ENCODE measurements at regions of chr9 and their contacts with region 1.

Region 1: DNA sequence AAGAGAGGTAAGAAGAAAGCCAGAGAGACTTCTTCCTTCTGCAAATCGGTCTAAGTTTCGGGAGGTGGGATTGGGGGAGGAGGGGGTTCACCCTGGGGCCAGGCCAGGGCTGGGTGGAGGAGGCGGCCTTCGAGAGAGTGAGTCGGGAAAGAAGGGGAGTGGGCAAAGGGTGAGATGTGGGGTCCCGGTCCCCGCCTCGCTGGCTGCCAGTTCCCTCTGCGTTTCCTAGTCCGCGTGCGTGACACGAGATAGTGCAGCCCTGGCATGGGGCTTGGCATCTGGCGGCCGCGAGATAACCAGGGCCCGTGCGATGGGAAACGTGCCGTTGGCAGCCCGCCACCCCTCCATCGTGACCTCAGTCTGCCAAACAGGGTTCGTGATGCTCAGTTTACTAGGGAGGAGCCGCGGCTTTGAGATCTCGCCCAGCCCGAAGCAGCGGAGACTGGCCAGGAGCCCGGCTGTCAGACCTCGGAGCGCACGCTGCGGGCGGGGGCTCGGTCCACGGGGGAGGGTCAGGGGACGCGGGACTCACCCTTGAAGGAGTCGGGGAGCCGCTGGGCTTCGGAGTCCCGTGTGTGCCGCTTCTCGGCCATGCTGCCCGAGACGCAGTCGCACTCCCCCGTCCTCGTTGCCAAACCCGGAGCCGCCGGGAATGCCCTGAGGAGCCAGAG is at the start of gene STOM:
- DNase-seq: peak; percentile 81
- H3K4me3 ChIP-seq: peak within 1 kb of the TSS; percentile 33 to 53 (median 44)
- H3K27ac ChIP-seq: peak within 1 kb of the TSS; percentile 92 to 96 (median 92)
- H3K4me1 ChIP-seq: peaks cover 28 to 76% (median 48%) of the 10 kb centered on the region in 4 donors
- H3K27me3 ChIP-seq: no peaks in the 10 kb centered on the region
- CTCF ChIP-seq: no peak
- EP300 ChIP-seq: no peak
- POLR2A ChIP-seq: peak; percentile 96
- total RNA-seq, gene STOM: 78.2 to 195 (median 111) TPM

Region 2: DNA sequence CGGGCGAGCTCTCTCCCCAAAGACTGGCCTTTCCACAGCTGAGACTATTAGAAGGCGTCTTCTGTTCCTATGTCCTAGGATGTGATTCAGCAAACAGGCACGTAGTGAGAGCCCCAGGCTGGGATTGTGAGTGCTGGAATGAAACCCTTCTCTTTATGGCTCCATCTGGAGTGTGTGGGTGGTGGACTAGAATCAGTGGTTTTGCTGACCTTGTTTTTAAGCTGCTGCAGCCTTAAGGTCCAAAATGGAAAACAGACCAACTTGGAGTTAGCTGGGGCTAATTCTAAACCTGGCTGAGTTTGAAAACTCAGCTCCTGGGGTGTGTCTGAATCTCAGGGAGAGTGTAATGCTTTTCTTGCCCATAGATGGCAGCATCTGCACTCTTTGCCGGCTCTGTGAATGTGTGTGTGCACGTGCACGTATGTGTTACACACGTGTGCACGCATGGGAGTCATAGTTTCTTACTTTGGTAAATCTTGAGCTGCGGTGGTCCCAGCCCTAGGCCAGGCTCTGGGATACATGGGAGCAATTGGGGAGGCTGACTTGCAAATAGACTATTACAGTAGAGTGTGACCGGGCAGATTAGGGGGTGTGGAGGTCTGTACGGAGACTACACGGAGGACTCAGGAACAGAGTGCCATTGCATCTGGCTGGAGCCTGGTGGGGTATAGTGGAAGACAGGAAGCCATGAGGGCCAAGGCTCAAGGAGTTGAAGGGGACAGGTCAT is 91.0 kb before region 1 on chr9:
- in situ Hi-C with region 1: no loop called
- intact Hi-C with region 1: loop called (anchors 1 kb)
- DNase-seq: peak; percentile 67
- H3K4me3 ChIP-seq: no peak overlapping the region
- H3K27ac ChIP-seq: peak overlapping the region; percentile 95 to 98 (median 96)
- H3K4me1 ChIP-seq: peaks cover 52 to 94% (median 83%) of the 10 kb centered on the region in 4 donors
- H3K27me3 ChIP-seq: no peaks in the 10 kb centered on the region
- CTCF ChIP-seq: peak; percentile 76 to 95 (median 81)
- EP300 ChIP-seq: peak; percentile 56
- POLR2A ChIP-seq: no peak

Region 3: GRCh38 chr9:121322037-121322775 is 47.5 kb before region 1 on chr9:
- in situ Hi-C with region 1: no loop called
- intact Hi-C with region 1: loop called (anchors 5 kb)
- DNase-seq: no peak
- H3K4me3 ChIP-seq: no peak overlapping the region
- H3K27ac ChIP-seq: peak overlapping the region; percentile 72 to 87 (median 84)
- H3K4me1 ChIP-seq: peaks cover 14 to 48% (median 21%) of the 10 kb centered on the region in 4 donors
- H3K27me3 ChIP-seq: no peaks in the 10 kb centered on the region
- CTCF ChIP-seq: no peak
- EP300 ChIP-seq: peak; percentile 53
- POLR2A ChIP-seq: no peak

Region 4: DNA sequence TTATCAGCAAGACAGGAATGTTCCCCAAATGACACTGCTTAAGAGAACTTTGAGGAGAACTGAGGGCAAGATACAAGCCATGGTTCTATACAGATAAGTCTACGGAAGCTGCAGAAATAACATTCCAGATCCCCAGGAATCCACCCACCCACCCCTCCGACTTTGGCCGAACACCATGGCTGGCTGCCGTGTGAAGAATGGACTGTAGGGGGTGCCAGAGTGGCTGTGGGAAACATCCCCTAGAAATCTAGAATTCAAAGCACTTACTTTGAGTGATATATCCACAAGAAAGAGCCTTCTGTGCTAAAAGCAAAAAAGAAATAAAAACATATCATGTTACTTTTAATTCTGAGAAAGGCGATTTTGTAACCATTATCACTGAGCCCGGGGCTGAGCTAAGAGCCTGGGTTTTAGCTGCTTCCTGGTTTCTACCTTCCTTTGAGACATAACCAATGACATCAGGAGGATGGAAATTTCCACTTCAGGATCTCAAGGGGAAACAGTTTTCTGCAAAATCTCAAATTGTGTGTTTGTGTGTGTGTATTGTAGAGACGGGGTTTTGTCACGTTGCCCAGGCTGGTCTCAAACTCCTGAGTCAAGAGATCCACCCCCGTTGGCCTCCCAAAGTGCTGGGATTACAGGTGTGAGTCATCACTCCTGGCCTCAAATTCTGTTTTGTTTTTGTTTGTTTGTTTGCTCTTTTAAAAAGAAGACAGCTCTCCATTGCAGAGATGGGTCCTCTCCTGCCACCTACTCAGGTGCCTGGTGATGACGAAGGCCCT is 93.5 kb after region 1 on chr9:
- in situ Hi-C with region 1: no loop called
- intact Hi-C with region 1: no loop called
- DNase-seq: peak; percentile 20
- H3K4me3 ChIP-seq: no peak overlapping the region
- H3K27ac ChIP-seq: no peak overlapping the region
- H3K4me1 ChIP-seq: no peaks in the 10 kb centered on the region
- H3K27me3 ChIP-seq: peaks cover 6% of the 10 kb centered on the region
- CTCF ChIP-seq: peak in 4 of 5 experiments; percentile 28 to 57 (median 52)
- EP300 ChIP-seq: no peak
- POLR2A ChIP-seq: no peak

Region 5: GRCh38 chr9:122087406-122088200 is 717.9 kb after region 1 on chr9:
- in situ Hi-C with region 1: no loop called
- intact Hi-C with region 1: no loop called
- DNase-seq: no peak
- H3K4me3 ChIP-seq: no peak overlapping the region
- H3K27ac ChIP-seq: peak overlapping the region; percentile 42 to 93 (median 68)
- H3K4me1 ChIP-seq: peaks cover 20 to 30% (median 26%) of the 10 kb centered on the region in 4 donors
- H3K27me3 ChIP-seq: no peaks in the 10 kb centered on the region
- CTCF ChIP-seq: no peak
- EP300 ChIP-seq: no peak
- POLR2A ChIP-seq: no peak